GM10248 (cell line): ENCODE measurements at regions of chr12 and their contacts with region 1.

Region 1: DNA sequence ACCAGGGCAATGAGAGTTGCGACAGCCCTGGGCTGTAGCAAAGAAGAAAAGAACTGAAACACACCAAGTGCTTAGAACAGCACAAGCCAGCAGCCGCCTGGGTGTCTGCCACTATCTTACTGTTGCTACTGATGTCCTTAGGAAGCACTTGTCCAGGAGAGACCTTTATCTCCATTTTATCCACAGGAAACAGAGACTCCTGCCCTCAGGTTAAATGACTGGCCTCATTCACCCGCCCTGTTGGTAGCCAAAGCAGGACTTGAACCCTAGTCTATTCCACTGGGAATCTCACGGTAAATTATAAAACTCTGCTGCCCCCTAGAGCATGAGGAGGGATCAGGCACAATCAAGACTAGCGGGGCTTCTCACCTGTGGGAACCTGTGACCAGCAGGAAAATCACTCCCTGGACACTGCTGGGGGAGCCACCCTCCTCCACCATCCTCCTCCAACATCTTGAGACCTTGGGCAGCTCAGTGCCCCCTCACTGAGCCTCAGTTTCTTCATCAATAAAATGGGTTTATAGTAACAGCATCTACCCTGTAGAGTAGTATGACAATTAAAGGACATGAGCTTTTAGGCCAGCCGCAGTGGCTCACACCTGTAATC is 20.5 kb upstream of the TESC start:
- DNase-seq: peak; percentile 69
- CTCF ChIP-seq: peak; percentile 72

Region 2: DNA sequence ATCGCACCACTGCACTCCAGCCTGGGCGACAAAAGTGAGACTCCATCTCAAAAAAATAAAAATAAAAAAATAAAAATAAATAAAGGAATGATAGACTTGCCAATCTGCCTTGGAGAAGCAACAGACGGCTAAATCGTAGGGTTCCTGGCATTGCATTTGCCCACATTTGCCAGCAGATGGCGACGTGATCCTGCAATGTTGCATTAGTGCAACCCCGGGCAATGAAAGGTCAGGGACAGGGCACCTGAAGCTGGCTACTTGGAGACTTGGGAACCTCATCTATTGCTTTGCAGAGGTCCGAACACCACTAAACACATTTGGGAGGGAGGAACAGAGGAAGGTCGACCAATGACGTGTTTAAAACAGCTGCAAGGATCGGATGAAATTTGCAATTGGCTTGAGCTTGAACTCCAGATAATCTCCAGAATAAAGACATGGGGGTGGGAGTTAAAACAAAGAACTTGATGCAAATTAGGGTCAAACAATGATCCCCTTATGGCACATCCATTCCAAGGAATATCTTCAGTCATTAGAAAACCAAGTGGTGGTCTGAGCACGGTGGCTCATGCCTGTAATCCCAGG is 416.4 kb before region 1 on chr12:
- CTCF ChIA-PET with region 1: interaction called, 19 read pairs
- POLR2A ChIA-PET with region 1: no interaction called
- DNase-seq: peak; percentile 73
- CTCF ChIP-seq: peak; percentile 95

Region 3: GRCh38 chr12:117025481-117026151 is 94.1 kb before region 1 on chr12:
- CTCF ChIA-PET with region 1: interaction called, 122 read pairs
- POLR2A ChIA-PET with region 1: no interaction called
- DNase-seq: peak; percentile 79
- CTCF ChIP-seq: peak; percentile 83

Region 4: GRCh38 chr12:117032593-117033381 is 86.9 kb before region 1 on chr12:
- CTCF ChIA-PET with region 1: interaction called, 17 read pairs
- POLR2A ChIA-PET with region 1: no interaction called
- DNase-seq: no peak
- CTCF ChIP-seq: no peak

Region 5: DNA sequence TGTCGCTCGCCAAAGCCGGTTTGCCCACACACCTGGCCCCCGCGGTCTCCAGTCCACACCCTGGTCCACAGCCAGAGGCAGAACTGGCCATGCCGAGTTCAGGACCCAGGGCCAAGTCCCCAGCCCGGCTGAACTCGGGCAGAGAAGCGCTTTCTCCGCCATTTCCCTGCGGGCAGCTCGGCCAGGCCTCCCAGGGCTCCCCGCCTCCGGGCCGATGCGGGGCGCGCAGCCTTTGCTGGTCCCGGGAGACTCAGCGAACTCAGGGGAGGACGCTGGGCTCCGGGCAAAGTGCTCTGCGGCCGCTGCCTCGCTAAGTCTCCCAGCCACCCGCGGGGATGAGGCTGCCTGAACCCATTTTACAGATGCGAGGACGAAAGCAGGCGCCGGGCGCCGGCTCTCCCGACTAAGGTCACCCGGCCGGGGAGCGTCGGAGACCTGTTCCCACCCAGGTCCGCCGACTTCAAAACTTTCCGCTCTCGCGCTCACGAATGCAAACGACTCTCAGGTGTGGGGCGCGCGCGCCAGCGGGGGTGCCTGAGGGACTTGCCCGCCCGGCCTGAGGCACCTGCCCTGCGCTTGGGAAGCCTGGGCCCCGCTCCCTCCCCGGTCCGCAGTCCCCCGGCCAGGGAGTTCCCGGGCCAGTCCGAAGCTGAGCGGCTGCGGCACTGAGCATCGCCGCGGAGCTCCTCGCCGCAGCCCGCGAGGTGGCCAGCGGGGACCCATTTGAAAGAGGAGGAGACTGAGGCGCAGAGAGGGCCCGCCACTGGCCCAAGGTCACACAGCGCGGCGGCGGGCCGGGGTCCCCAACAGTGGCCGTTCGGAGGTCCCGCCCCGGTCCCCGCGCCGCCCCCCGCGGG is 21.1 kb before region 1 on chr12:
- CTCF ChIA-PET with region 1: interaction called, 11 read pairs
- POLR2A ChIA-PET with region 1: no interaction called
- DNase-seq: peak; percentile 59
- CTCF ChIP-seq: no peak

Region 6: GRCh38 chr12:117130801-117131200 is 11.1 kb after region 1 on chr12:
- CTCF ChIA-PET with region 1: interaction called, 37 read pairs
- POLR2A ChIA-PET with region 1: no interaction called
- DNase-seq: no peak
- CTCF ChIP-seq: no peak